ENCODE measurements at regions of chr20 and their contacts with region 1.

Region 1: DNA sequence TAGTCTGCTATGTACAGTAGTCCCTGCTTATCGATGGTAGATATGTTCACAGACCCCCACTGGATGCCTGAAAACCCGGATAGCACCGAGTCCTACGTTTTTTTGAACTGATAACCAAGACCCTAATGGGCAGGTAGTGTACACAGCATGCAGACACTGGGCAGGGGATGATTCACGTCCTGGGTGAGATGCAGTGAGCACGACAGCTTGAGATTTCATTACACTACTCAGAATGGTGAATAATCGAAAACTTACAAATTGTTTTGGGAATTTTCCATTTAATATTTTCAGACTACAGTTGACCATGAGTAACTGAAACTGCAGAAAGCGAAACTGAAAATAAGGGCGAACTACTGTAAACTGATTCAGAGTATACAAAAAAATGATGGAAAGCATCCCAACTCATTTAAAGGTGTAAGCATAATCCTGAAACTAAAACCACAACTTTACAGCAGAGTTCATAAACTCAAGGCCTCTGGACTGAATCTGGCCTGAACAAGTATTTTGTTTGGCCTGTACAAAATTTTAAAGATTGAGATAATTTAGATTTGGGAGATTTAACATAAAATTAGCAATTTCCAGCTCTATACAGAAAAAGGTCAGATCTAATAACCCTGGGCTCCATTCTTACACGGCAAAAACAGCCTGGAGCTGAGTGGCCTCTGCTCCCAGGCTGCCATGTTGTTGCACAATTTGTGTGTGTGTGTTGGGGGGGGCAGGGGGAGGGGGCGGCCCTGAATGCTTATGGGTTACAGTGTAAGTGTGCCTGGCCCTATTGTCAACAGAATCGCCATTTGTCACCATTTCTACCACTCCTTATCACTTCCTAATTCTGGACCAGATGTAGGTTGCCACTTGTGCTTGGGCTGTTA is 34.9 kb downstream of the RNF24 start:
- DNase-seq: peak; percentile 54
- H3K4me3 ChIP-seq: peak overlapping the region; percentile 29 to 34 (median 29)
- H3K27ac ChIP-seq: peak overlapping the region; percentile 73
- H3K4me1 ChIP-seq: peaks cover 6% of the 10 kb centered on the region
- H3K27me3 ChIP-seq: no peaks in the 10 kb centered on the region
- CTCF ChIP-seq: no peak

Region 2: DNA sequence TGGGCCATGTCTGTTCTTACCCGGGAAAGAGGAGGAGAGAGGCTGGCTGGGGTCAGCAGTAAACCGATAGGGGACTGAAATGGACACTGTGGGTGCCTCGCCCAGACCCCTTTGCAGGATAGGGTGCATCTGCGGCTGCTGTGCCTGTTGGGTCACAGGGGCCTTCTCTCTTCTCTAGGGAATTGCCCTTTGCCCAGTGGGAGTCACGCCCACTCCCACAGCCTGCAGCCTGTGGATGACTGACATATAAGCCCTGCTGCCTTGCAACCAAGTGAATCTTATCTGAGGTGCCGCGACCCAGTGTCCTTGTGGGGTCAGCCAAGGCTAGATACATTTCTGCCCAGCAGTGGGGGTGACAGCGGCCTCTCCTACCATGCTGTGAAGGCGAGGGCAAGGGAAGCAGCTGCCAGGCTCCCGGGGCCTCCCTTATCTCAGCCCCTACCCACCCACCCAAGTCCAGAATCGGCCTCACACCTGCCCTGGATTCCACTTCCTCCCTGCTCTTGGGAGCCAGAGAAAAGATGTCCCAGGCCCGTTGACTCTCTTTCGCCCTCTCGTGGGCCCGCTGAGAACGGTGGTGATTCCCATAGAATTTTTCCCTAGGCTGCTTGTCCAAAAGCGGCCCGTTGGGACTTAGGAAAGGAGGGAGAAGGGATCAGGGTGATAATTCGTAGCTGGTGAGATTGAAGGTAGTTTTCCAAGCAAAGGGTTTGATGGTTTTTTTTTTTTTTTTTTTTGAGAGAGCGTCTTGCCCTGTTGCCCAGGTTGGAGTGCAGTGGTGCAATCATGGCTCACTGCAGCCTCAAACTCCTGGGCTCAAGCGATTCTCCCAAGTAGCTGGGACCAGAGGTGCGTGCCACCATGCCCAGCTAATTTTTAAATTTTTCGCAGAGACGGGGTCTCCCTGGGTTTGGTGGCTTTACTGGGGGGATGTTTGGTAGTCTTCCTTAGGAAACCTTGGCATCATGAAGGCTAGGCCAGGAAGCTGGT is 111.3 kb after region 1 on chr20:
- CTCF ChIA-PET with region 1: interaction called, 12 read pairs
- dilution Hi-C with region 1: no loop called
- in situ Hi-C with region 1: no loop called
- intact Hi-C with region 1: no loop called
- DNase-seq: peak; percentile 42
- H3K4me3 ChIP-seq: no peak overlapping the region
- H3K27ac ChIP-seq: no peak overlapping the region
- H3K4me1 ChIP-seq: no peaks in the 10 kb centered on the region
- H3K27me3 ChIP-seq: no peaks in the 10 kb centered on the region
- CTCF ChIP-seq: peak; percentile 77 to 86

Measured in mammary epithelial cell (primary cell).